Activated naive CD4-positive, alpha-beta T cell treated with anti-CD3 and anti-CD28 coated beads for 36 hours (primary cell): ENCODE measurements at regions of chr3 and their contacts with region 1.

Region 1: DNA sequence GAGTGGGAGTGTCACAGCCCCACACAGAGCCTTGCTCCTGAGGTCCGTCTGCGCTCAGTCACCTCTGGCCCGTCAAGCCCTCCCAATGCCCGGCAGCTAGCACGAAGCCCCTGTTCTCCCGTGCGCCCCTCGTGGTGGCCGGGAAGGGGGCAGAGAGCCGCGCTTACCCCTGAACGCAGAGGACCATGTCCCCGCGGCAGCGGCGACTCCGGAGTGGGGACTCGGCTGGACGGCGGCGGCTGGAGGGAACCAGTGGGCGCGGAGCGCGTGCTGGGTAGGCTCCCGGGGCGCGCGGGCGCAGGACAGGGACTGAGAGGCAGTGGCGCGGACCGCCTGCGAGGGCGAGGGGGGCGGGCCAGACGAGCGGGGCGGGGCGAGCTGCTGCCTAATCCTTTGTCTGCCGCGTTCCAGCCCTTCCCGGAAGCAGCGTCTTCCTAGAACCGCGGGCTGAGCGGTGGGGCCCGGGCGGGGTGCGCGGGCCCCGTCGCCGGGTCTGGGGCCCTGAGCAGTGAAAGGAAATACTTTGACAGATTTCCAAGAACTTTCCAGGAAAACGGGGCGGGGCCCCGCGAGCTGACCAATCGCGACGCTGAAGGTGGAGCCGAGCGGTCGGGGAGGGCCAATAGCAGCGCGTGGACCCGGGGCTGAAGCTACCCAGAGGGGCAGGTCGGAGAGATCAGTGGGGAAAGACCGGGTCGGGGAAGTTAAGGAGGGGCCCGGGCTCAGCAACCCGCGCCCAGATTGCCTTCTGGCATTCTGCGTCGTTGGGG is at the start of gene CISH:
- DNase-seq: peak; percentile 99
- H3K4me3 Mint-ChIP-seq: peak within 1 kb of the TSS; percentile 96
- H3K27ac Mint-ChIP-seq: peak within 1 kb of the TSS; percentile 100
- H3K4me1 Mint-ChIP-seq: peaks cover 36% of the 10 kb centered on the region
- H3K27me3 Mint-ChIP-seq: no peaks in the 10 kb centered on the region
- total RNA-seq, gene CISH: 136 to 138 TPM

Region 2: DNA sequence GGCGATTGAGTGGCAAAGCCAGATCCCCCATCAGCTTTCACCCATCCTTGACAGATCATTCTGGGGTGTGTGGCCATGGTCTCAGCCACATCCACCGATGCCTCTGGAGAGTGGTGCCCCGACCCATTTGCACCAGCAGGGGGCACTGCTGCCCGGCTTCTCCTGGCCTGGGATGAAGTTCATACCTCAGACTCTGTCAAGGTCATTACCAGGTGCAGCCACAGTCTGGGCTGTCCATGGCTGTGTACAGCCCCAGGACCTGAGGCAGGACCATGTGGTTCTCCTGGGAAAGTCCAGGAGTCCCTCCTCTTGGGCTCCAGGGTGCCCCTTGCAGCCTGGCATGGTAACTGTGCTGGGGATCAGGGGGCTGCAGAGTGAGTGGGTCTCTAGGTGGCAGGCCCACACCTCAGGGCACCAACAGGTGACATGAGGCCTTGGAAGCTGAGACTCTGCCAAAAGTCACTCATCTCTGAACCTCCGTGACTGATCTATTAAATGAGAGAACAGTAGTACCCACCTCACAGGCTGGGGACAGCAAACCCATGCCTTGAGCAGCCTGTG is 175.5 kb before region 1 on chr3:
- CTCF ChIA-PET with region 1: interaction called, 6 read pairs
- intact Hi-C with region 1: loop called (anchors 1 kb)
- DNase-seq: peak; percentile 85
- H3K4me3 Mint-ChIP-seq: no peak overlapping the region
- H3K27ac Mint-ChIP-seq: no peak overlapping the region
- H3K4me1 Mint-ChIP-seq: no peaks in the 10 kb centered on the region
- H3K27me3 Mint-ChIP-seq: peaks cover 2% of the 10 kb centered on the region

Region 3: GRCh38 chr3:50587806-50588758 is 23.6 kb before region 1 on chr3:
- CTCF ChIA-PET with region 1: interaction called, 243 read pairs
- intact Hi-C with region 1: loop called (anchors 1 kb)
- DNase-seq: peak; percentile 94
- H3K4me3 Mint-ChIP-seq: peak overlapping the region; percentile 42
- H3K27ac Mint-ChIP-seq: peak overlapping the region; percentile 99
- H3K4me1 Mint-ChIP-seq: peaks cover 91% of the 10 kb centered on the region
- H3K27me3 Mint-ChIP-seq: no peaks in the 10 kb centered on the region

Region 4: DNA sequence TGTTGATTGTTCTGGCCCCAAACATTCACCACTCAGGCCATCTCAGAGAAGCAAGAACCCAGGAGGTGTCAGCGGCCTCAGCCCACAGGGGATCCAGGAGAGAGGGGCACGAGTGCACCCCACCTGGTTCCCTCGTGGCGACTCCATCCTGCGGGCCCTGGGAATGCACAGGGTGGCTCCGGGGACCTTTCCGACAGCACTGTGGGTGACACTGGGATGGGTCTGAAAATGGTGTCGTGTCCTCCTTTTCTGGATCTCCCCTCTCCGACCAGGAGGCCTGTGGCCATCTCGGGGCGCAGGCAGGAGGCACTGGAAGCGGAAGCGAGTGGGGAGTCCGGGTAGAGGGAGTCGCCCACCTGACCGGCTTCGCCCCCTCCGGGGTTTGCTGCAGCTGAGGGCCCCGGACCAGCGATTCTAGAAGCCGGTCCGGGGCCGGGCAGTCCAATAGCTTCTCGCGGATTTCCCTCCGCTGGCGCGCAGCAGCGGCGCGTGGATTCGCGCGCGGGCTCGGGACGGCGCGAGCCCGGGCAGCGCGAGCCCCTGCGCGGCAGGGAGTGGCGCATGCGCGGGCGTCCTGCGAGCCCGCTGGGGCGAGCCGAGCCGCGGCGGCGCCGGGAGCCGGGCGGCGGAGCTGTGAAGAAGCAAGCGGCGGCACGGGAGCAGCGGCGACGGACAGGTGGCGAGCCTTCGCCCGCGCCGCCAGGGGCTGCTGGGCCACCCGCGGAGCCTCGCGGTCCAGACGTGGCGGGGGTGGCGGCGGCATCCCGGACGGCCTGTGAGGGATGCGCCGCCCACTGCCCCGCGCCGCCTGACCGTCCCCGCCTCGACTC is 62.9 kb after region 1 on chr3 and contains the start of gene DOCK3:
- CTCF ChIA-PET with region 1: interaction called, 16 read pairs
- intact Hi-C with region 1: loop called (anchors 1 kb)
- DNase-seq: peak; percentile 57
- H3K4me3 Mint-ChIP-seq: peak within 1 kb of the TSS; percentile 64
- H3K27ac Mint-ChIP-seq: peak within 1 kb of the TSS; percentile 9
- H3K4me1 Mint-ChIP-seq: peaks cover 7% of the 10 kb centered on the region
- H3K27me3 Mint-ChIP-seq: peaks cover 37% of the 10 kb centered on the region
- total RNA-seq, gene DOCK3: 1.6 to 1.7 TPM

Region 5: DNA sequence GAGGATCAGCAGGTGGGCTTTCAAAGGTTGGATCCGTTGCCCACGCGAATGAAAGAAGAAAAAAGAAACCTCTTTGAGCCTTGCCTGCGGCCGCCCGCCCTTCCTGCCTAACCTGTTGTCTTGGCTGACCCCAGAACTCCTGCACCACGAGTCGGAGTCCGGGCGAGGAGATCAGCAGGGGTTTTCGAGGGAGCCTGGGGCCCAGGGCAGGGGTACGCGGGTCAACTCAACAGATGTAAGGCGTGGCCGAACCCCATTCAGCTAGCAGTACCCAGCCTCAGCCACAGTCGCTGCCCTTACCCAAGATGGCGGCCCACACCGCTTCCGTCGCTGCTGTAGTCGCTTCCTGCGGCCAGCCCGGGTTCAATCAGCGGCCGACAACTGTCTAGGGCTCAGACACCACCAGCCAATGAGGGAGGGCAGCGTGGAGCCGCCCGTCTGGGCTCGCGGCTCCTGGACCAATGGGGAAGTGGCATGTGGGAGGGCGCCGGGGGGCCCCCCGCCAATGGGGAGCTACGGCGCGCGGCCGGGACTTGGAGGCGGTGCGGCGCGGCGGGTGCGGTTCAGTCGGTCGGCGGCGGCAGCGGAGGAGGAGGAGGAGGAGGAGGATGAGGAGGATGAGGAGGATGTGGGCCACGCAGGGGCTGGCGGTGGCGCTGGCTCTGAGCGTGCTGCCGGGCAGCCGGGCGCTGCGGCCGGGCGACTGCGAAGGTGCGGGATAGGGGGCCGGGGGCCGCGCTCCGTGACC is 773.3 kb after region 1 on chr3 and contains the start of gene MANF:
- CTCF ChIA-PET with region 1: interaction called, 13 read pairs
- intact Hi-C with region 1: loop called (anchors 1 kb)
- DNase-seq: peak; percentile 99
- H3K4me3 Mint-ChIP-seq: peak within 1 kb of the TSS; percentile 97
- H3K27ac Mint-ChIP-seq: peak within 1 kb of the TSS; percentile 98
- H3K4me1 Mint-ChIP-seq: peaks cover 47% of the 10 kb centered on the region
- H3K27me3 Mint-ChIP-seq: no peaks in the 10 kb centered on the region
- total RNA-seq, gene MANF: 91.7 to 108 TPM

Region 6: DNA sequence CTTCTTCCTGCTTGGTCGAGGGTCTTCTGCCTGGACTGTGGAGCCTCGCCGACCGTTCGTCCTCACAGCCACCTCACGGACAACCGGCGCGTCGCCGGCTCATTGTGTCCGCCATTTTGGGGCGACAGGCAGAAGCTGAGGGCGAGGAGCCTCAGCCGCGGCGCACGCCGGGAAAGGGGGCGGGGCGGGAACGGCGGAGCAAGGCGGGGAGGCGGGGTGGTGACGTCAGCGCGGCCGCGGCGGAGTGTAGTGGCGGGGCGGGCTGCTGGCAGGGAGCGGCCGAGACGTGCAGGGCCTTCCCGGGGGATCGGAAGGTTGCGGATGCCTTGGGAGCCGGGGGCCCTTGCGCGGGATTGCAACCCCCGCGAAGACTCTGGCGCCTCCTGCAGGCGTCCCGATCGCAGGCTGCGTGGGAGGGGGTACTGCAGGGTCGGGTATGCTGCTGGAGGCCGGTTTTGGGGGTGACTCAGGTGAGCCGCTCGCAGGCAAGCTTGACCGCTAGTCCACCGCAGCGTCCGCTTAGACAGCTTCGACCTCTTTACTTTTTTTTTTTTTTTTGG is 1666.9 kb after region 1 on chr3 and contains the start of gene WDR82:
- CTCF ChIA-PET with region 1: no interaction called
- intact Hi-C with region 1: loop called (anchors 10 kb)
- DNase-seq: peak; percentile 98
- H3K4me3 Mint-ChIP-seq: peak within 1 kb of the TSS; percentile 95
- H3K27ac Mint-ChIP-seq: peak within 1 kb of the TSS; percentile 98
- H3K4me1 Mint-ChIP-seq: peaks cover 57% of the 10 kb centered on the region
- H3K27me3 Mint-ChIP-seq: no peaks in the 10 kb centered on the region
- total RNA-seq, gene WDR82: 176 to 177 TPM